A673 (cell line): ENCODE measurements at regions of chr4 and their contacts with region 1.

Region 1: DNA sequence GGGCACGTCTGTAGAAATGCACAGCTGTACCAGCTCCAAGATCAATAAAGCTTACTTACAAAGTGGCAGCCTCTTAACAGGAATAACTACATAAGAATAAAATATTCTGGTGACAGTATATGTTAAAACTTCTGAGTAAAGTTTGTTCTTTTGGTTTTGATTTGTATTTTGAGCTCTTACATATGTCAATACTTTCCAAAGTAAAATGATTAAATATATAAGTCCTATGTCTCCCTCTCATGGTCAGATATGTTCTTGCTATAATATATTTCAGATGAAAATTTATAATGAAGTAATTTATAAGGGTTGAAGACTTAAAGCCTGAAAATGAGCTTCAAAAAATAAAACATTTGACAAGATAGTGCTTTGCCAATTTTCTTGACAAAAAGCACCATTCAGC is 254.4 kb downstream of the NPFFR2 start:
- DNase-seq: peak; percentile 32
- H3K4me3 ChIP-seq: no peak overlapping the region
- H3K27ac ChIP-seq: no peak overlapping the region
- H3K4me1 ChIP-seq: no peaks in the 10 kb centered on the region
- H3K27me3 ChIP-seq: no peaks in the 10 kb centered on the region
- CTCF ChIP-seq: peak; percentile 43

Region 2: DNA sequence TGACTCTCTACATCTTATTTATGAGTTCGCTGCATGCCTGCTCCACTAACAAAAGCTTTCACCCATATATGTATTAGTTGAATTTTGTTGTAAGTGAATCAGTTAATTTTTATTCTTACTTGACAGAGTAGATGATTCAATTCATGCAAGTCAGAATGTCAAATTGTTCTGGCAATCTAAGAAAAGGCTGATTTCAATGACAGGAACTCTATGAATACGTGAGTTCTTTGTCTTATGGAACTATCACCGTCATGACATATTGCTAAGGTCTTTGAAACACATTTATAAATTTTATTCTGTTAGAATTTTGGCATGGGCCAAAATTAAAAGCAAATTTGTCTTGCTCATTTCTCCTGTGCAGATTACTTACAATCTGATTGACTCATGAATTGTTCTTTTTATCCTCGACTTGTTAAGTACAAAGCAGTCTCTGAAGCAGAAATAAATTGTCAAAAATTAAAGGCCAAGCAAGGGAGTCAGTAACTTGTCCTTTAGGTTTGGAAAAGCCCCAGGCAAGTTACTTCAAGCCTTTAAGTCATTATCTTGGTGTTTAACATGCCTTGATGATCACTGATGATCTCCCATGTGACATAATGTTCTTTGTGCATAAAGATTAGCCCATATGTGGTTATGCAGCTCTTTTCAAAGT is 413.3 kb before region 1 on chr4:
- CTCF ChIA-PET with region 1: no interaction called
- POLR2A ChIA-PET with region 1: no interaction called
- intact Hi-C with region 1: loop called (anchors 10 kb)
- DNase-seq: peak; percentile 61
- H3K4me3 ChIP-seq: no peak overlapping the region
- H3K27ac ChIP-seq: peak overlapping the region; percentile 29
- H3K4me1 ChIP-seq: peaks cover 32% of the 10 kb centered on the region
- H3K27me3 ChIP-seq: no peaks in the 10 kb centered on the region
- CTCF ChIP-seq: no peak